ENCODE measurements at regions of chr11 and their contacts with region 1.

Region 1: GRCh38 chr11:58579192-58580129 is 598 bp downstream of the ZFP91 start:
- DNase-seq: peak; percentile 88
- H3K4me3 Mint-ChIP-seq: peak overlapping the region; percentile 100
- H3K27ac Mint-ChIP-seq: peak overlapping the region; percentile 100
- H3K4me1 Mint-ChIP-seq: peaks cover 26% of the 10 kb centered on the region
- H3K27me3 Mint-ChIP-seq: no peaks in the 10 kb centered on the region
- CTCF ChIP-seq: peak; percentile 55

Region 2: GRCh38 chr11:58567889-58568512 is 11.5 kb before region 1 on chr11:
- CTCF ChIA-PET with region 1: interaction called, 24 read pairs
- POLR2A ChIA-PET with region 1: interaction called, 5 read pairs
- intact Hi-C with region 1: no loop called
- DNase-seq: peak; percentile 70
- H3K4me3 Mint-ChIP-seq: no peak overlapping the region
- H3K27ac Mint-ChIP-seq: no peak overlapping the region
- H3K4me1 Mint-ChIP-seq: peaks cover 9% of the 10 kb centered on the region
- H3K27me3 Mint-ChIP-seq: no peaks in the 10 kb centered on the region
- CTCF ChIP-seq: peak; percentile 65

Region 3: GRCh38 chr11:58654079-58654907 is 74.8 kb after region 1 on chr11:
- CTCF ChIA-PET with region 1: interaction called, 16 read pairs
- POLR2A ChIA-PET with region 1: interaction called, 4 read pairs
- intact Hi-C with region 1: loop called (anchors 1 kb)
- DNase-seq: peak; percentile 80
- H3K4me3 Mint-ChIP-seq: no peak overlapping the region
- H3K27ac Mint-ChIP-seq: no peak overlapping the region
- H3K4me1 Mint-ChIP-seq: peaks cover 7% of the 10 kb centered on the region
- H3K27me3 Mint-ChIP-seq: no peaks in the 10 kb centered on the region
- CTCF ChIP-seq: peak; percentile 88

Region 4: DNA sequence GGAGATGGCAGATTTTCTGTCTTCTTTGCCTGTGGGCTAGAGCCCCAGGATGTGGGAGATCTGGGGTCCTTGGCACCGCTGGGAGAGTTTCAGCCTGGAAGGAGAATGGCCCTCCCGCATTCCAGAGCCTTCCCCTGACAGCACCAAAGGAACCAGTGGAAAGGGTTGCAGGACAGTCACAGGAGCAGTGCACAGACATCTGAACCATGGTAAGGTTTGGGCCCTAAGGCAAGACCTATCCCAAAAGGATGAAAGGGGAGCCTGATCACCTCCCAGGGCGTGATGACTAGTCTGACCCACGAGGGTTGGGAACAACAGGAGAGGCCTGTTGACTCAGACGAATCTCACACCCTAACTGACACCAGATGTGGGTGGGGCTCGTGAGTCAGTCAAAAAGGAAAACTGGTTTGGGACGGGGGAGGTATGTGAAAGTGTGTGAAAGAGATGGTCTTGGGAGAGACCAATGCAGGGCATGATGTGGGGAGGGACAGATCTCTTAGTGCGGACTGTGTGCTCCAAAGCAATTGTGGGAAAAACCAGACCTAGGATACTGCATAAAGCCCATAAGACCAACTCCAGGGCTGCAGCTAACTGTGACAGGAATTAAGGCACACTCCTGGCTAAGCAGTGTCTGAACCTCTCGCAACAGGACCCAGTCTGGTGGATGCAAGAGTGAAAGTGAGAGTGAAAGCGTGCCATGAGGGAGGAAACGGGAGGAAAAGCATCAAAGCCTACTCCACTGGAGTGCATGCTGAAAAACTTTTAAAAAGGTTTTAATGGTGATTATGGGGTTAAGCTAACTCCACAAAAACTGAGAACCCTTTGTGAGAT is 191.4 kb after region 1 on chr11:
- CTCF ChIA-PET with region 1: no interaction called
- POLR2A ChIA-PET with region 1: no interaction called
- intact Hi-C with region 1: loop called (anchors 5 kb)
- DNase-seq: peak; percentile 95
- H3K4me3 Mint-ChIP-seq: peak overlapping the region; percentile 46
- H3K27ac Mint-ChIP-seq: peak overlapping the region; percentile 53
- H3K4me1 Mint-ChIP-seq: peaks cover 23% of the 10 kb centered on the region
- H3K27me3 Mint-ChIP-seq: no peaks in the 10 kb centered on the region
- CTCF ChIP-seq: no peak

Region 5: GRCh38 chr11:59053387-59053786 is 473.9 kb after region 1 on chr11:
- CTCF ChIA-PET with region 1: interaction called, 15 read pairs
- POLR2A ChIA-PET with region 1: no interaction called
- intact Hi-C with region 1: no loop called
- DNase-seq: peak; percentile 69
- H3K4me3 Mint-ChIP-seq: no peak overlapping the region
- H3K27ac Mint-ChIP-seq: no peak overlapping the region
- H3K4me1 Mint-ChIP-seq: peaks cover 7% of the 10 kb centered on the region
- H3K27me3 Mint-ChIP-seq: peaks cover 64% of the 10 kb centered on the region
- CTCF ChIP-seq: peak; percentile 71

Region 6: GRCh38 chr11:59142530-59143507 is 563.4 kb after region 1 on chr11 and contains the start of gene FAM111A:
- CTCF ChIA-PET with region 1: interaction called, 3 read pairs
- POLR2A ChIA-PET with region 1: interaction called, 20 read pairs
- intact Hi-C with region 1: loop called (anchors 5 kb)
- DNase-seq: peak; percentile 95
- H3K4me3 Mint-ChIP-seq: peak within 1 kb of the TSS; percentile 97
- H3K27ac Mint-ChIP-seq: peak within 1 kb of the TSS; percentile 98
- H3K4me1 Mint-ChIP-seq: peaks cover 50% of the 10 kb centered on the region
- H3K27me3 Mint-ChIP-seq: no peaks in the 10 kb centered on the region
- CTCF ChIP-seq: peak; percentile 6
- total RNA-seq, gene FAM111A: 26.3 and 27.7 TPM in 2 replicates

Region 7: DNA sequence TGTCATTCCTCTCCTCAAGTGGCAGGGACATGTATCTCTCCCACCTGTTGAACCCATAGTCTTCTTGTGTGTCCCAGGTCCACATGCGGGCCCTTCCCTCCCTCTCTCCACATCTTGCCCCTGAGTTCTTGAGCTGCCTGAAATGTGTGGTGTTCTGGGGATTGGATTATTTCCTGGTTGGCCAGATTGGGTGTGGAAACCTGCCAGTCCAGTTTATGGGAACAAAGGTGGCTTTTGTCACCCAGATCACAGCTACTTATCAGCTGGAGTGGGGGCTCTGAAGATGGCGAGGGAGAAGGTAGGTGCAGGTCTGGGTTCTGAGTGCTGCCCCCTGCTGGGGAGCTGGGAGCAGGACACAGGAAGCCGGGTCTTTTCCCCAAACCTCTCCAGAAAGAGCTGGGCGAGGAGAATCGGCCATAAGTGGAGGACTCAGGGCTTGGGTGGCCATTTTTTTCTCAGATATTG is 606.7 kb after region 1 on chr11:
- CTCF ChIA-PET with region 1: no interaction called
- POLR2A ChIA-PET with region 1: no interaction called
- intact Hi-C with region 1: no loop called
- DNase-seq: peak; percentile 55
- H3K4me3 Mint-ChIP-seq: no peak overlapping the region
- H3K27ac Mint-ChIP-seq: no peak overlapping the region
- H3K4me1 Mint-ChIP-seq: peaks cover 14% of the 10 kb centered on the region
- H3K27me3 Mint-ChIP-seq: no peaks in the 10 kb centered on the region
- CTCF ChIP-seq: peak; percentile 61

Region 8: DNA sequence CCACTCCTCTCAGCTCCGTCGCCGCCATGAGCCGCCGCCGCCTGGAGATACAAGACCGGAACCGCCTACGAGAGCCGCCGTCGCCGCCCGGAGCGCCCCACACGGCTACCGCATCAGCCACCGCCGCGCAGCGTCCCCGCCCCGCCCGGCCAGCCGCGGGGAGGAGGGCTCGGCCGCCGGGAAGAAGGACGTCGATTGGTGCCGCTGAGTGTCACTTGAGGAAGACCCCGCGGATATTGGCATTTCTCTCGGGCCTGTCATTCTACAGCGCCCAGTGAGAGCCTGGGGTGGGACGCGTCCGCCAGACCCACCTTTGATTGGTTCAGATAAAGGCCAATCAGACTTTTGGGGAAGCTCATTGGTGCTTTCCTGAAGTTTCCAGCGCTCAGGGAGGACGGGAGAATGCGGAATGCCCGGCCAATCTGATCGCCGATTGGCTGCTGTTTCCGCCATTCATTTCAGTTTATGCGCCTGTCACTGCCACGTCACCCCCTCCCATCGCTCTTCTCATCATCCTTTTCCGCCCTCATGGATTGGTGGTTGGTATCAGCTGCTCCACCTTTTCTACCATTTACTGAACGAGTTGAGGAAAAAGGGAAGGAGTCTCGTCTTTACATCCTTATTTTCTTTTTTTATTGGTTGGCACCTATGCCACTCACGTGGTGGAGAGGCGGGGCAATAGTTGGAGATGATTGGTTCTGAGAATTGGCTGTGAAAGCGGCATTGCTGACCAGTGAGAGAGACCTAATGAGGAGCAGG is 1036.4 kb after region 1 on chr11 and contains the start of gene OSBP:
- CTCF ChIA-PET with region 1: no interaction called
- POLR2A ChIA-PET with region 1: interaction called, 3 read pairs
- intact Hi-C with region 1: loop called (anchors 5 kb)
- DNase-seq: peak; percentile 100
- H3K4me3 Mint-ChIP-seq: peak within 1 kb of the TSS; percentile 77
- H3K27ac Mint-ChIP-seq: peak within 1 kb of the TSS; percentile 89
- H3K4me1 Mint-ChIP-seq: peaks cover 24% of the 10 kb centered on the region
- H3K27me3 Mint-ChIP-seq: no peaks in the 10 kb centered on the region
- CTCF ChIP-seq: no peak
- total RNA-seq, gene OSBP: 73.7 and 76.1 TPM in 2 replicates